ENCODE measurements at regions of chr3 and their contacts with region 1.

Region 1: DNA sequence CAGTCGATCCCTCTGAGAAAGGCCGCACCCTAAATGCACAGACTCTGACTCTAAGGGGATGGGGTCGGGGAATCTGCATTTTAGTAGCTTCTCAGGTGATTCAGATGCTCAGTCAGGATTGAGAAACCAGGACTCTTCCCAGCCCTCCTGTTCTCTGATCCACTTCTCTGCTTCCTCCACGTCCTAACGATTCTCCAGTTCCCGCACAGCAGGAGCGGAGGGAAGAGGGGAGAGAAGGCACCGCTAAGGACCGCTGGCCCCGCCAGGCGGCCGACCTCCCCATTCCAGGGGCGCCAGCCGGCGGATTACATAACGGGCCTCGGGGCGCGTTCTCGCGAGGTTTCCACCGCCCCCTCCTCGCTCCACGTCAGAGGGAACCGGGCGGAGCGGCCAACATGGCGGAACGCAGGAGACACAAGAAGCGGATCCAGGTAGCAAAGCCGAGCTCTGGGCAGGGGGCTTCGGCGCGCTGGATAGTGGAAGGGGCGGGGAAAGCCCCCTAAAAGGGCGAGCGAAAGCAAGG is at the start of gene SEC62:
- DNase-seq: peak; percentile 95
- ATAC-seq: peak; percentile 93
- H3K4me3 Mint-ChIP-seq: peak within 1 kb of the TSS; percentile 97
- H3K27ac Mint-ChIP-seq: peak within 1 kb of the TSS; percentile 99
- H3K4me1 Mint-ChIP-seq: peaks cover 31% of the 10 kb centered on the region
- H3K27me3 Mint-ChIP-seq: no peaks in the 10 kb centered on the region
- total RNA-seq, gene SEC62: 77.1 to 77.4 TPM

Region 2: GRCh38 chr3:169764452-169765274 is 201.8 kb before region 1 on chr3 and contains the start of gene TERC:
- POLR2A ChIA-PET with region 1: interaction called, 14 read pairs
- DNase-seq: peak; percentile 89
- ATAC-seq: peak; percentile 86
- H3K4me3 Mint-ChIP-seq: peak within 1 kb of the TSS; percentile 96
- H3K27ac Mint-ChIP-seq: peak within 1 kb of the TSS; percentile 98
- H3K4me1 Mint-ChIP-seq: peaks cover 22% of the 10 kb centered on the region
- H3K27me3 Mint-ChIP-seq: no peaks in the 10 kb centered on the region
- total RNA-seq, gene TERC: 7.3 to 10.9 TPM

Region 3: DNA sequence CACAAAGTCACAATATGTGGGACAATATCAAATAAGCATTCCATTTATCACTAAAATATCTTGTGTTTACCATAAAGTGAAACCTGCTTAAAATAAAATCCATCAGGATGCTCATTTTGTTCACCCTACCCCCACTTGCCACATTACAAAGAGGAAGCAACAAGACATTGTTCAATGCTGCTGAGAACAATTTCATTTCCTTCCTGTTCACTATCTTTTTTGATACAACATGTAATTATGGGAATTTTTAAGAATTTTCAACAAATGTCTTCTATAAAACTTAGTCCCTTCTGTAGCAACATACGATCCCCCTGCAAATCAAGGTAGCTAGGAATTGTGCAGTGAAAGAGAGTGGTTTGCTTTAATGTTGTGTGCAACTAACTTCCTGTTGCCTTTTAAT is 36.4 kb after region 1 on chr3:
- POLR2A ChIA-PET with region 1: interaction called, 11 read pairs
- DNase-seq: no peak
- ATAC-seq: no peak
- H3K4me3 Mint-ChIP-seq: peak overlapping the region; percentile 45
- H3K27ac Mint-ChIP-seq: peak overlapping the region; percentile 88
- H3K4me1 Mint-ChIP-seq: peaks cover 31% of the 10 kb centered on the region
- H3K27me3 Mint-ChIP-seq: no peaks in the 10 kb centered on the region

Measured in activated naive CD8-positive, alpha-beta T cell treated with anti-CD3 and anti-CD28 coated beads, Interleukin-2, amount 10 ng/mL, durations not matched to agents 7 days and 5 days (primary cell).